ENCODE measurements at regions of chr19 and their contacts with region 1.

Region 1: DNA sequence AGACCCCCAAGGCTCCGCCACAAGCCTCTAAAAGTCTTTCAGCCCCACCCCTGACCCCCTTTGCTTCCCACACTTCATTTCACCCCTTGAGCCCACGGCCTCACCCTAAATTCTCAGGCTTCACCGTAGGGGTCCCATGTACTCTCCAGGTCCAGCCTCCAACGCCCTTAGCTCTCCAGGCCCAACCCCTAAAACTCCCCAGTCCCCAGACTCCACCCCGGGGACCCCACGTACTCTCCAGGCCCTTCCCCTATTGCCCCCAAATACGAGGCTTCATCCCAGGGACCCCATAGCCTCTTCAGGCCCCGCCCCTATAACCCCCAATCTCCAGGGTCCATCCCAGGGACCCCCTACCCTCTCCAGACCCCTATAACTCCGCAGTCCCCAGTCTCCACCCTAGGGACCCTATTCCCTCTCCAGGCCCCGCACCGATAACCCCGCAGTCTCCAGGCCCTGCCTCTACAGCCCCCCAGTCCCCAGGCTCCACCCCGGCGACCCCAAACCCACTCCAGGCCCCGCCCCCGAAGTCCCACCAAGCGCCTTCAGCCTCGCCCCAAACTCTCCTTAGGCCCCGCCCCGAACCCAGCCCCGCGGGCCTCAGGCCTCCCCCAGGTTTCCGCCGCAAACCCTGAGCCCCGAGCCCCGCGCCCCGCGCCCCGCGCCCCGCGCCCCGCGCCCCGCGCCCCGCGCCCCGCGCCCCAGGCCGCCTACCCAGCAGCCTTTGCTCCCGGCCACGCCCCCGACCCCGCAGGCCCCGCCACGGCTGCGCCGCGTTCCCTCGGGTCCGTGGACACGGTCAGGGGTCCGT is 540 bp downstream of the MED16 start:
- DNase-seq: no peak
- ATAC-seq: peak; percentile 57
- H3K4me3 Mint-ChIP-seq: peak overlapping the region; percentile 91
- H3K27ac Mint-ChIP-seq: peak overlapping the region; percentile 99
- H3K4me1 Mint-ChIP-seq: peaks cover 21% of the 10 kb centered on the region
- H3K27me3 Mint-ChIP-seq: no peaks in the 10 kb centered on the region
- CTCF ChIP-seq: no peak

Region 2: GRCh38 chr19:872266-872951 is 20.0 kb before region 1 on chr19:
- CTCF ChIA-PET with region 1: no interaction called
- POLR2A ChIA-PET with region 1: interaction called, 3 read pairs
- intact Hi-C with region 1: loop called (anchors 2 kb)
- DNase-seq: peak; percentile 49
- ATAC-seq: peak; percentile 85
- H3K4me3 Mint-ChIP-seq: peak overlapping the region; percentile 32
- H3K27ac Mint-ChIP-seq: peak overlapping the region; percentile 56
- H3K4me1 Mint-ChIP-seq: peaks cover 8% of the 10 kb centered on the region
- H3K27me3 Mint-ChIP-seq: no peaks in the 10 kb centered on the region
- CTCF ChIP-seq: no peak

Region 3: GRCh38 chr19:913080-913748 is 20.8 kb after region 1 on chr19 and contains the start of gene R3HDM4:
- CTCF ChIA-PET with region 1: no interaction called
- POLR2A ChIA-PET with region 1: interaction called, 213 read pairs
- intact Hi-C with region 1: loop called (anchors 1 kb)
- DNase-seq: peak; percentile 85
- ATAC-seq: peak; percentile 50
- H3K4me3 Mint-ChIP-seq: peak within 1 kb of the TSS; percentile 89
- H3K27ac Mint-ChIP-seq: peak within 1 kb of the TSS; percentile 86
- H3K4me1 Mint-ChIP-seq: peaks cover 36% of the 10 kb centered on the region
- H3K27me3 Mint-ChIP-seq: no peaks in the 10 kb centered on the region
- CTCF ChIP-seq: no peak
- total RNA-seq, gene R3HDM4: 174 and 189 TPM in 2 replicates

Region 4: GRCh38 chr19:920051-920864 is 27.8 kb after region 1 on chr19:
- CTCF ChIA-PET with region 1: interaction called, 5 read pairs
- POLR2A ChIA-PET with region 1: interaction called, 16 read pairs
- intact Hi-C with region 1: loop called (anchors 1 kb)
- DNase-seq: peak; percentile 70
- ATAC-seq: peak; percentile 38
- H3K4me3 Mint-ChIP-seq: peak overlapping the region; percentile 72
- H3K27ac Mint-ChIP-seq: no peak overlapping the region
- H3K4me1 Mint-ChIP-seq: peaks cover 34% of the 10 kb centered on the region
- H3K27me3 Mint-ChIP-seq: no peaks in the 10 kb centered on the region
- CTCF ChIP-seq: no peak

Region 5: DNA sequence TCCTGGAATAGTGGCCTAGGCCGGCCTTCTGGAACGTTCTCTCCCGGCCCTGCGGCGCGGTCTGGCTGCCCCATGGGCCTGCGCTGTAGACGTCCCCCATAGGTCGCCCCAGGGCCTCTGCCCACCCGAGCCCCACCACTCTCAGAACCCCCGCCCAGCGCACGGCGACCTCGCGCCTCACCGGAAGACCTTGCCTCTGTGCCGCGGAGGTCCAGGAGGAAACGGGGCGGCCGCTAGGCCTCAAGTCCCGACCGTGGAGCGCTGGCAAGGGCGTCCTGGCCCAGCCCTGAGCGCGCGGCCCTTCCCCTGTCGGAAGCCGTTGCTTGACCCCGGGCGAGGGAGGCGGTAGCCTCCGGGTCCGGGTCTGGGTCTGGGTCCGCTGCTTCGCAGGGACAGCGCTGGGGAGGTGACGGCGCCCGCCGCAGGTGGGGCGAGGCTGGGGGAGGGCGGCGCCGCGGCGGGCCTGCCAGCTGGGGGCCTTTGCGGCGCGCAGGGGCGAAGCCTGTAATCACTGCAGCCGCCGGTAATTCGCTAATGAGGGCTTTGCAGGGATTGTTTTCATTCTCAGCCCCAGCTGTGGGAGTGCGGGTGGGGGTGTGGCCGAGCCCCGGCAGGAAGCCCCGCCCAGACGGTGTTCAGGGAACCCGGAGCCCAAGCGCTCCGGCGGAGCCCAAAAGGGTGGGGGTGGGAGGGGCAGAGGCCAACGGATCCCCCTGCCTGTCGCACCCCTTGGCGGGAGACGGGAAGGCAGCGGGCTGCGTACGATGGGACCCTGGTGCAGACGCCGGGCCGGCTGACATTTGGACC is 578.0 kb after region 1 on chr19:
- CTCF ChIA-PET with region 1: no interaction called
- POLR2A ChIA-PET with region 1: no interaction called
- intact Hi-C with region 1: no loop called
- DNase-seq: peak; percentile 57
- ATAC-seq: peak; percentile 69
- H3K4me3 Mint-ChIP-seq: peak overlapping the region; percentile 76
- H3K27ac Mint-ChIP-seq: no peak overlapping the region
- H3K4me1 Mint-ChIP-seq: peaks cover 25% of the 10 kb centered on the region
- H3K27me3 Mint-ChIP-seq: peaks cover 2% of the 10 kb centered on the region
- CTCF ChIP-seq: no peak

Measured in activated B cell treated with CpG ODN at 0.5 μM for 24 hours (primary cell).